IMR-90 (cell line): ENCODE measurements at regions of chr17 and their contacts with region 1.

Region 1: DNA sequence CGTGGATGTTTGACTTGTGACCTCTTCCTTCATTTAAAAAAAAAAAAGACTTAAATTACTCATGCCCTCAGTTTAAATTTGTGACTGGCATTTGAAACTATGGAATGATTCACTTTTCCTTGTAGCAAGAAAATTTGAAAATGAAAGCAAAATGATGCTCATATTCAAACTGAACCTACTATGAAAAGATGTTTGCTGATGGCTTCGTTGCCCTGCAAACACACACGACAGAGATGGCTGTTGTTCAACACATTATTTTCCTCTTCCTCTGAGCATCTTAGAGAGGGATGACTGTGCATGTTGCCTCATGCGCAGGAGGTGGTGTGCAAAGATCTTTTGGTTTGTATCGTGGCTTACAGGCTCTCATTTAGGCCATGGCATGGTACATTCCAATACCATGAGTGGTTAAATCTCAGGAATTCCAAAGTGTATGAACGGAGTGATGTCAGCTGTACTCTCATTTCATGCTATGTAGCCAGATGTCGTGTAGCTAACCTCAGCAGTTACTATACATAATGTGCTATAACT is 164.5 kb downstream of the PRKCA start:
- DNase-seq: peak; percentile 100
- ATAC-seq: peak; percentile 78
- H3K4me3 ChIP-seq: peak overlapping the region; percentile 18; the same call in 1 of the 2 replicates
- H3K27ac ChIP-seq: peak overlapping the region; percentile 18
- H3K4me1 ChIP-seq: peaks cover 37% of the 10 kb centered on the region
- H3K27me3 ChIP-seq: no peaks in the 10 kb centered on the region
- CTCF ChIP-seq: no peak
- POLR2A ChIP-seq: no peak
- RAD21 ChIP-seq: peak; percentile 23; the same call in 1 of the 2 replicates

Region 2: DNA sequence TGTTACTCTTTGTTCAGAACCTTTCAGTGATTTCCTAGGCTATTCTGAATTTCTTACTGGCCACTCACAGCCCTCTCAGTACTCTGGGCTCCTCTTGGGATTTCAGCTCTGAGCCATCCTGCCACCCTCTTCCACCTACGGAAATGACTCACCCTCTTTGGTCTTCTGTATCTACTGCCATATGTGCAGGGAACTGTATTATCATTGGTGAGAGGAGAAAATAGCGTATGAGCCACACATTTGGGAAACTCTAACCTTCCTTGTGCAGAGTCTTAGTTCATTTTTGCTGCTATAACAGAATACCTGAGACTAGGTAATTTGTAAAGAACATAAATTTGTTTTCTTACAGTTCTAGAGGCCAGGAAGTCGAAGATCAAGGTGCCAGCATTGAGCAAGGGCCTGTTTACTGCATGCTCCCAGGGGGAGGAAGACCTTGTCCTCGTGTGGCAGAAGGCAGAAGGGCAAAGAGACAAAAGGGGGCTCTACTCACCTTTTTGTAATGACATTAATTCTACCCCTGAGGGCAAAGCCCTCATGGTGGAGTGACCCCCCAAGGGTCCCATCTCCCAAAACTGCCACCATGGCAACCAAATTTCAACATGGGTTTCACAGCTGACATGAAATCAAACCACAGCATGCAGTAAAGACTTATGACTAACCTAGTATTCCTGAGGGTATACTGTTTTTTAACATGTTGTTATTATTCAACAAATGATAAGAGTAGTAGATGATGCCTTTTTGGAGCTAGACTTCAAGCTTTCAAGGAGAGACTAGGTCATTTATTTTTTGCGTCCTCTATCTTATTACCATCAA is 27.3 kb after region 1 on chr17:
- CTCF ChIA-PET with region 1: no interaction called
- POLR2A ChIA-PET with region 1: no interaction called
- dilution Hi-C with region 1: no loop called
- in situ Hi-C with region 1: no loop called
- intact Hi-C with region 1: loop called (anchors 1 kb)
- DNase-seq: peak; percentile 94
- ATAC-seq: peak; percentile 96
- H3K4me3 ChIP-seq: no peak overlapping the region
- H3K27ac ChIP-seq: peak overlapping the region; percentile 41
- H3K4me1 ChIP-seq: peaks cover 17% of the 10 kb centered on the region
- H3K27me3 ChIP-seq: no peaks in the 10 kb centered on the region
- CTCF ChIP-seq: no peak
- POLR2A ChIP-seq: no peak
- RAD21 ChIP-seq: no peak; the same call in 1 of the 2 replicates

Region 3: DNA sequence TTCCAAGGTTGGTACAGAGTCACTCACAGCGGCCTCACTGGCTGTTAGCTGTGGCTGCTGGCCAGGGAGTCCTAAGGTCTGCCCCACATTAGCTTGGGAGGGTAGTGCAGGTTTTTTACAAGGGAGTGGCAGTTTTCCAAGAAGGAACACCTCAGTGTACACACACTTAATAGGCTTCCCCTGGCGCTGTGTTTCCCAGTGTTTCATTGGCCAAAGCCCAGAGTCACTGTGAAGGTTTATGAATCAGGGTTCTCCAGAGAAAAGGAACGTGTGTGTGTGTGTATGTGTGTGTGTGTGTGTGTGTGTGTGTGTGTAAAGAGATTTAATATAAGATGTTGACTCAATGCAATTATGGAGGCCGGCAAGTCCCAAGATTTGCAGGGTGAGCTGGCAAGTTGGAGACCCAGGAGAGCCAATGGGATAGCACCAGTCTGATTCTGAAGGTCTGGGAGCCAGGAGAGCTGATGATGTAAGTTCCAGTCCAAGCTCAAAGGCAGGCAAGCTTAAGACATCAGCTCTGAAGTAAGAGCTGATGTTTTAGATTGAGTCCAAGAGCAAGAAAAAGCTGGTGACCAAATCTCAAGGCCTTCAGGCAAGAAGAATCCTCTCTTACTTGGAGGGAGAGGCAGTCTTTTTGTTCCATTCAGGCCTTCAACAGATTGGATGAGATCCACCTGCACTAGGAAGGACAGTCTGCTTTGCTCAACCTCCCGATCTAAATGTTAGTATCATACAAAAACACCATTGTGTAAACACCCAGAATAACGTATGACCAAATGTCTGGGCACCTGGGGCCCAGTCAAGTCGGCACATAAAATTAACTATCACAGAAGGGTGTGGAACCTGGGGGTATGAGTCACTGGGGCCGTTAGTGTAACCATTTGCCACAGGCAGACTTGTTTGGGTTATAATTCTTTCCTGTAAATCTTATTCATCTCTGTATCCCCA is 42.3 kb after region 1 on chr17:
- CTCF ChIA-PET with region 1: no interaction called
- POLR2A ChIA-PET with region 1: no interaction called
- dilution Hi-C with region 1: no loop called
- in situ Hi-C with region 1: no loop called
- intact Hi-C with region 1: loop called (anchors 5 kb)
- DNase-seq: peak; percentile 90
- ATAC-seq: peak; percentile 48
- H3K4me3 ChIP-seq: no peak overlapping the region
- H3K27ac ChIP-seq: peak overlapping the region; percentile 70
- H3K4me1 ChIP-seq: peaks cover 24% of the 10 kb centered on the region
- H3K27me3 ChIP-seq: no peaks in the 10 kb centered on the region
- CTCF ChIP-seq: no peak
- POLR2A ChIP-seq: no peak
- RAD21 ChIP-seq: no peak

Region 4: DNA sequence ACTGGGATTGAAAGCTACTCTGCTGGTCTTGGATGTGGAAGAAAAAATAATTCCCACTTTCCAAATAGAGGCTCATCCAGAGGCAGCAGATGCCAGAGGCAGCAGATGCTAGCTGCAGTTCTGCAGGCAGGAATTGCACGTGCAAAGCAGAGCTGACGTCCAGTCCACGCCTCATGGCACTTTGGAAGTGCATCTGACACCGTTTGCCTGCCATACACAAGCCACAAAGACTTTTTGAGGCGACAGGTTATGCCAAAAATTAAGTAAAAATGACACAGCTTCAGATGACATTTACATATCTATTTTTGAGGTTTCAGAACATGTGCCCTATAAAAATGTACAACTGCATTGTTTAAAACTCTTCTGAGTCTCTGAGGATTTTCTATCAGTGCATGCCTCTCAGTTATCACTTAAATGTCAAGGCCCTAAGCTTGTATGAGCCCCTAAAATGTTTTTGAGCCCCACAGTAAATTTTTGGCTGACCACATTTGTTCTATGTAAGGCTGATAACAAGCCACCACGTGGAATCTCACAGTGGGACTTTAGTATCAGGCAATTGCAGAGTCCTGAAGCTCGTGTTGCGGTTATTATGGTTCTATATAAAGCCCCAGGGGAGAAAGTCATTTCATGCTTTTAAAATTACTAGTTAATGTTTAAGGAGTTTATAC is 74.7 kb after region 1 on chr17:
- CTCF ChIA-PET with region 1: no interaction called
- POLR2A ChIA-PET with region 1: no interaction called
- dilution Hi-C with region 1: no loop called
- in situ Hi-C with region 1: no loop called
- intact Hi-C with region 1: loop called (anchors 5 kb)
- DNase-seq: no peak
- ATAC-seq: no peak
- H3K4me3 ChIP-seq: no peak overlapping the region
- H3K27ac ChIP-seq: peak overlapping the region; percentile 3
- H3K4me1 ChIP-seq: peaks cover 35% of the 10 kb centered on the region
- H3K27me3 ChIP-seq: no peaks in the 10 kb centered on the region
- CTCF ChIP-seq: no peak
- POLR2A ChIP-seq: no peak
- RAD21 ChIP-seq: no peak

Region 5: GRCh38 chr17:66567234-66568170 is 100.6 kb after region 1 on chr17:
- CTCF ChIA-PET with region 1: no interaction called
- POLR2A ChIA-PET with region 1: no interaction called
- dilution Hi-C with region 1: no loop called
- in situ Hi-C with region 1: no loop called
- intact Hi-C with region 1: loop called (anchors 2 kb)
- DNase-seq: peak; percentile 88
- ATAC-seq: peak; percentile 86
- H3K4me3 ChIP-seq: no peak overlapping the region
- H3K27ac ChIP-seq: peak overlapping the region; percentile 93
- H3K4me1 ChIP-seq: peaks cover 22% of the 10 kb centered on the region
- H3K27me3 ChIP-seq: no peaks in the 10 kb centered on the region
- CTCF ChIP-seq: peak; percentile 89
- POLR2A ChIP-seq: no peak
- RAD21 ChIP-seq: peak; percentile 92

Region 6: GRCh38 chr17:66612993-66613392 is 146.1 kb after region 1 on chr17:
- CTCF ChIA-PET with region 1: no interaction called
- POLR2A ChIA-PET with region 1: no interaction called
- dilution Hi-C with region 1: no loop called
- in situ Hi-C with region 1: no loop called
- intact Hi-C with region 1: no loop called
- DNase-seq: no peak
- ATAC-seq: no peak
- H3K4me3 ChIP-seq: no peak overlapping the region
- H3K27ac ChIP-seq: no peak overlapping the region
- H3K4me1 ChIP-seq: peaks cover 5% of the 10 kb centered on the region
- H3K27me3 ChIP-seq: no peaks in the 10 kb centered on the region
- CTCF ChIP-seq: no peak
- POLR2A ChIP-seq: no peak
- RAD21 ChIP-seq: no peak